Breast epithelium (tissue), 4 donors: ENCODE measurements at regions of chr2 and their contacts with region 1.

Region 1: GRCh38 chr2:41540272-41540998 is 507.4 kb upstream of the PKDCC start:
- DNase-seq: no peak
- H3K4me3 ChIP-seq: no peak overlapping the region
- H3K27ac ChIP-seq: no peak overlapping the region
- H3K4me1 ChIP-seq: no peaks in the 10 kb centered on the region
- H3K27me3 ChIP-seq: no peaks in the 10 kb centered on the region
- CTCF ChIP-seq: no peak
- POLR2A ChIP-seq: no peak

Region 2: GRCh38 chr2:41821167-41821566 is 280.7 kb after region 1 on chr2:
- intact Hi-C with region 1: loop called (anchors 5 kb)
- DNase-seq: no peak
- H3K4me3 ChIP-seq: no peak overlapping the region
- H3K27ac ChIP-seq: no peak overlapping the region
- H3K4me1 ChIP-seq: no peaks in the 10 kb centered on the region
- H3K27me3 ChIP-seq: peaks cover 0 to 3% of the 10 kb centered on the region in 2 donors
- CTCF ChIP-seq: no peak
- POLR2A ChIP-seq: no peak